Right ventricle myocardium inferior (tissue), 1 donor: ENCODE measurements at regions of chr17 and their contacts with region 1.

Region 1: GRCh38 chr17:42276359-42276608 is at the start of gene STAT5B:
- DNase-seq: peak; percentile 87
- ATAC-seq: peak; percentile 86
- total RNA-seq, gene STAT5B: 32.9 TPM

Region 2: DNA sequence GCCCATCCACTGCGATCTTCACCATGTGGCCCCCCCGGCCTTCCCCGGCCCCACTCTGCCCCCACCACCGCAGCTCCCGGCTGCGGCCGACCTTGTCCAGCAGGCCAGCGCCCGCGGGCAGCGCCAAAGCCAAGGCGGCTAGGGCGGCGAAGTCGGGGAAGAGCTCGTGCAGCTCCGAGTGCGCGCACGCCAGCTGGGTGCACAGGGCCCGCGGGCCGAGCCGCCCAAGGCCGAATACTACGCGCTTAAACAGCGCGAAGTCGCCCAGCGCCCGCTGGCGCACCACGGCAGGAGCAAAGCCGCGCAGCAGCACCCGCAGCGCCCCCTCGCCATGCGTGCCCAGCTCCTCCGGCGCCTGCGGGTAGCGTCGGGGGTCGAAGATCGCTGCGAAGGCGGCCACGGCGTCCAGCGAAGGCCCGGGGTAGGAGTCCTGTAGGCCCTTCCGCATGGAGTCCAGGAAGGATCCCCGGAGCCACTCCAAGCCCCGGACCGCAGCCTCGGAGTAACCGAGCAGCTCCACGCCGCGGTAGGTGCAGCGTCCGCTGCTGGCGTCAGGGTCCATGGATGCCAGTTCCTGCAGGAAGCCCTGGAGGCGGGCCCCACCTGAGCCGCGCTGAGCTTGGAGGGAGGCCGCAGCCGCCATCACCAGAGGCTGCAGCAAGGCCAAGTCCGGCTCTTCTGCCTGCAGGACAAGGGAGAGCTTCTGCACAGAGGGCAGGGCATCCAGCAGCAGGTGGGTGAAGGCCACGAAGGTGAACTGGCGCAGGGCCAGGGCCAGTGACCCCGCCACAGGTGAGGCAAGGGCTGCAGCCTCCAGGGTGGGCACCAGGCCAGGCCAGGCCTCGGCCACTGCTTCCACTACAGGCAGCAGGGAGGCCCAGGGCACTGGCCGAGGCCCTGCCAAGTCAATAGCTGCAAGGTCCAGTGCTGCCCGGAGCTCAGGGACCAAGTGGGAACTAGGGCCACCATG is 236.2 kb before region 1 on chr17:
- intact Hi-C with region 1: no loop called
- DNase-seq: no peak
- ATAC-seq: peak; percentile 19

Region 3: DNA sequence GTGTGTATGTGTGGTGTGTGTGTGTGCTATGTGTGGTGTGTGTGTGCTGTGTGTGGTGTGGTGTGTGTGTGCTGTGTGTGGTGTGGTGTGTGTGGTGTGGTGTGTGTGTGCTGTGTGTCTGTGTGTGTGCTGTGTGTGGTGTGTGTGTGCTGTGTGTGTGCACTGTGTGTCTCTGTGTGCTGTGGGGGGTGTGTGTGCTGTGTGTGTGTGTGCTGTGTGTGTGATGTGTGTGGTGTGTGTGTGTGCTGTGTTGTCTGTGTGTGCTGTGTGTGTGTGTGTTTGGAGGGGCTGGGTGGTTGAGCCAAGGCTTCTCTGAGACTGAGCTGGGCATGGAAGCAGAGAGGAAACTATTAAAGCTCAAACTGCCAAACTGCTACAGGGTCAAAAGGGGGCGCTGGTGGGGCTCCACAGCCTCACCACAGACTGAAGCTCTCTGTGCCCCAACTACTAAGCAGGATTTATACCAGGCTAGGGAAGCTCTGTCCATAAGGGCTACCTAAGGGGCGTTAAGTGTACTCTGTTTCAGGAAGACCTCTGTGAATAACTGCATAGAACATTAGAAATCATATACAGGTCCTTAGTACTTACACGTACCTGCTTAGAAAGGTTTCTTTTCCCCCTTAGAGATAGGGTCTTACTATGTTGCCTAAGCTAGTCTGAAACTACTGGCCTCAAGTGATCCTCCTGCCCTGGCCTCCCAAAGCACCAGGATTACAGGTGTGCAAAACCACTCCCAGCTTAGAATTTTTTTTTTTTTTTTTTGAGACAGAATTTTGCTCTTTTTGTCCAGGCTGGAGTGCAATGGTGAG is 54.1 kb before region 1 on chr17:
- intact Hi-C with region 1: loop called (anchors 10 kb)
- DNase-seq: no peak
- ATAC-seq: peak; percentile 32